ENCODE measurements at regions of chr6 and their contacts with region 1.

Region 1: GRCh38 chr6:158284007-158284875 is 28.0 kb upstream of the TULP4 start:
- DNase-seq: no peak
- ATAC-seq: peak; percentile 62
- H3K4me3 ChIP-seq: no peak overlapping the region
- H3K27ac ChIP-seq: peak overlapping the region; percentile 84 to 97
- H3K4me1 ChIP-seq: peaks cover 4 to 12% of the 10 kb centered on the region in 2 donors
- H3K27me3 ChIP-seq: no peaks in the 10 kb centered on the region

Region 2: GRCh38 chr6:158231551-158232315 is 52.5 kb before region 1 on chr6:
- intact Hi-C with region 1: loop called in 1 of 2 experiments (anchors 5 kb)
- DNase-seq: peak; percentile 81 to 91
- ATAC-seq: peak; percentile 79
- H3K4me3 ChIP-seq: peak overlapping the region; percentile 94 to 100
- H3K27ac ChIP-seq: peak overlapping the region; percentile 71 to 86
- H3K4me1 ChIP-seq: no peaks in the 10 kb centered on the region
- H3K27me3 ChIP-seq: no peaks in the 10 kb centered on the region

Region 3: DNA sequence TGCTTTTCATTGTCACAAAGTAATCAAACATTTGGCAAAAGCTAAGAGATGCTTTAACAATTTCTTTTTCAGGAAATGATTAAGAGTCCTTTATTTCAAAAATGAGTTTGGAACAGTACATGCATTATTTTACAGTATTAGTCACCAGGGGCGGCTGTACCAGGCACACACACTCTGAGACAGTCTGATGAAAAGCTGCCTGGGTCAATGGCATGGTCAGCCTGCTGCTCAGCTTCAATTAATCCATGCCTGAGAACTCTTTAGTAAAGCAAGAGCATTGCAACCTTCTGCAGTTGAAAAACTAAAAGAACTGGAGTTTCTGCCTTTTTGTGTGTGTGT is 133.5 kb after region 1 on chr6:
- intact Hi-C with region 1: no loop called
- DNase-seq: no peak
- ATAC-seq: no peak
- H3K4me3 ChIP-seq: no peak overlapping the region
- H3K27ac ChIP-seq: no peak overlapping the region
- H3K4me1 ChIP-seq: no peaks in the 10 kb centered on the region
- H3K27me3 ChIP-seq: no peaks in the 10 kb centered on the region